Endothelial cell of umbilical vein (primary cell): ENCODE measurements at regions of chr1 and their contacts with region 1.

Region 1: DNA sequence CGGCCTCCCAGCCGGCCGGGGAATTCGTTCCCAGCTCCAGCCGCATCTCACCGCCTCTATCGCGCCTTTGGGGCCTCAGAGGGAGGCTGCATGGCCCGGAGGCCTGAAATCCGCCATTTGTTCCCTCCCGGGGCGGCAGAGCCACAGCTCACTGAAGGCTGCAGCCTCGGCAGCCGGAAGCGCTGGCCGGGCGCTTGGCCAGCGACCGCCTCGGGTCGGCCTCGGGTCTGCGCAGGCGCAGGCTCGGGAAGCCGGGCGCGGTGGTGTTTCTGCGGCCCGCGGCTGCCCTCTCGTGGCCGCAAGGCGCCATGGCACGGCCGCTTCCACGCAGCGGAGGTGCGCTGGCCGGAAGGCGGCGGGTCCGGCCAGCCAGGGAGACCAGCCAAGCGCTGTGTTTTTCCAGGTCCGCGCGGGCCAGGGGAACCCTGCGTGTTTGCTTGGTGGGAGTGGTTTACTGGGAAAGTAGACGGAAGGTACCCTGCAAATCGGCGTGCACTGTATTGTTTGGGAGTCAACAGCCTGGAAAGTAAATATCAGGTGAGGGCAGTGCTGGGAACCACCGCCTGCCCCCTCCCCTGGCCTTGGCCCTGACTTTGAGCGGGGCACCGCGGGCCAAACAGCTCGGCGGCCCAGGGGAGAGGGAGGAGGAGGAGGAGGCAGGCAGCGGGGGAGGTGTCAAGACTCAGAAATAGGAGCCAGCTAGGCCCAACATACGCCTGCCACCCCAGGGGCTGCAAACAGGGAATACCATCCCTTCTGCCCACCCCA is 52.7 kb upstream of the CD34 start:
- DNase-seq: peak; percentile 94
- H3K4me3 ChIP-seq: peak overlapping the region in 2 of 3 experiments; percentile 1 to 17
- H3K27ac ChIP-seq: peak overlapping the region; percentile 81
- H3K4me1 ChIP-seq: peaks cover 29% of the 10 kb centered on the region
- H3K27me3 ChIP-seq: no peaks in the 10 kb centered on the region
- CTCF ChIP-seq: peak; percentile 92 to 99
- POLR2A ChIP-seq: peak; percentile 59

Region 2: GRCh38 chr1:207828485-207829158 is 135.0 kb before region 1 on chr1:
- CTCF ChIA-PET with region 1: interaction called, 69 read pairs
- POLR2A ChIA-PET with region 1: interaction called, 3 read pairs
- dilution Hi-C with region 1: no loop called
- intact Hi-C with region 1: loop called (anchors 1 kb)
- DNase-seq: peak; percentile 96
- H3K4me3 ChIP-seq: no peak overlapping the region
- H3K27ac ChIP-seq: peak overlapping the region; percentile 14
- H3K4me1 ChIP-seq: peaks cover 45% of the 10 kb centered on the region
- H3K27me3 ChIP-seq: no peaks in the 10 kb centered on the region
- CTCF ChIP-seq: peak; percentile 82 to 94
- POLR2A ChIP-seq: peak; percentile 23

Region 3: DNA sequence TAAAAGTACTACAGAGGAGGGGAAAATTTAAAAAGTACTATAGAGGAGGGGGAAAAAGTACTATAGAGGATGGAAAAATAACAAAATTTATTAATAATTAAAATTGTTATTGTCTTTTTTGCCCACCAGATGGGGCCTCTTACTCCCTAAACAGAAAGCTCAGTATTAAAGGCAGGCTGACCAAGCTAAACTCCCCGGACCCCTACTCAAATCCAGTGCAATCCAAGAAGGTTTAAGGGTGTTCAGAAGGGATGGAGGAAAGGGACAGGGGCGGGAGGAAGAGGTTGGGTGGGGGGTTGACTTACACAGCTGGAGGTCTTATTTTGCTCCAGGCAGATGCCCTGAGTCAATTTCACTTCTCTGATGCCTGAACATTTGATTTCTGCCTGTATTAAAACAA is 66.4 kb before region 1 on chr1:
- CTCF ChIA-PET with region 1: interaction called, 301 read pairs
- POLR2A ChIA-PET with region 1: interaction called, 8 read pairs
- dilution Hi-C with region 1: no loop called
- intact Hi-C with region 1: loop called (anchors 1 kb)
- DNase-seq: peak; percentile 57
- H3K4me3 ChIP-seq: no peak overlapping the region
- H3K27ac ChIP-seq: no peak overlapping the region
- H3K4me1 ChIP-seq: peaks cover 6% of the 10 kb centered on the region
- H3K27me3 ChIP-seq: no peaks in the 10 kb centered on the region
- CTCF ChIP-seq: peak; percentile 8 to 11
- POLR2A ChIP-seq: no peak

Region 4: GRCh38 chr1:207919523-207920170 is 44.0 kb before region 1 on chr1:
- CTCF ChIA-PET with region 1: interaction called, 50 read pairs
- POLR2A ChIA-PET with region 1: interaction called, 3 read pairs
- dilution Hi-C with region 1: no loop called
- intact Hi-C with region 1: loop called (anchors 1 kb)
- DNase-seq: peak; percentile 53
- H3K4me3 ChIP-seq: no peak overlapping the region
- H3K27ac ChIP-seq: no peak overlapping the region
- H3K4me1 ChIP-seq: peaks cover 30% of the 10 kb centered on the region
- H3K27me3 ChIP-seq: no peaks in the 10 kb centered on the region
- CTCF ChIP-seq: no peak
- POLR2A ChIP-seq: no peak

Region 5: DNA sequence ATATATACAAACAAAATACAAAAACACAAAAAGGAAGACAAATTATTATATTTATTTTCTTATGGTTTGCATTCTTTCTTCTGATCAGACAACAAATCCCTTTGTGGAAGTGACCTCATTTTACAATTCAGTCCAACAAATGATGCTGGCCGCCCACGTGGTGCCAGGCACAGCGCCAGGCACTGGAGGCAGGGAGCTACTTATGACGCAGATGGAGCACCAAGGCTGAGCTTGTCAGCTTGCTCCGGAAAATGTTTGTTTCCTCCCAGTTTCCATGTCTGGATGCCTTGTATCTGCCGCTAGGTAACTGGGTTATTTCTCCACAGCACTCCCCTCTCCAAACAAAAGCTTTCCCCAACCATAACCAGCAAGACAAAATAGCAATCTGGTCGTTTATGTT is 21.9 kb before region 1 on chr1:
- CTCF ChIA-PET with region 1: interaction called, 54 read pairs
- POLR2A ChIA-PET with region 1: interaction called, 14 read pairs
- dilution Hi-C with region 1: no loop called
- intact Hi-C with region 1: loop called (anchors 1 kb)
- DNase-seq: peak; percentile 97
- H3K4me3 ChIP-seq: peak overlapping the region in 1 of 3 experiments; percentile 8
- H3K27ac ChIP-seq: peak overlapping the region; percentile 92
- H3K4me1 ChIP-seq: peaks cover 52% of the 10 kb centered on the region
- H3K27me3 ChIP-seq: no peaks in the 10 kb centered on the region
- CTCF ChIP-seq: no peak
- POLR2A ChIP-seq: peak; percentile 49

Region 6: DNA sequence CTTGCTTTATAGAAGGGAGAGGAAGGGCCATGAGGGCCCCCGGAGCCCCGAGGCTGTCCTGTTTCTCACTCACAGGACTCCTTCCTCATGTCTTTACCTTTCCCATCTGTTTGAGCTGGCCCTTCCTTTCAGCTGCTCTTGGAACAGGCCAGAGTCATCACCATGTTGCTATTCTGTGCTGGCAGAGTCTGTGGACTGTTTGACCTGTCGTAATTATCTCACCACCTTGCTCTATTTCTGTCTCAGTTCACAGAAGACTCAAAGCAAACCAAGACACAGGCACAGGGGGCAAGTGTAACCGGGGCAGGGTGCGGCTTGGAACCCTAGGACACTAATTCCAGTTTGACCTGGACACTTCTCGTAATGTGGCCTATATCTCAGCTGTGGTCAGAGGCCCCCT is 51.6 kb after region 1 on chr1:
- CTCF ChIA-PET with region 1: no interaction called
- POLR2A ChIA-PET with region 1: no interaction called
- dilution Hi-C with region 1: no loop called
- intact Hi-C with region 1: no loop called
- DNase-seq: no peak
- H3K4me3 ChIP-seq: no peak overlapping the region
- H3K27ac ChIP-seq: no peak overlapping the region
- H3K4me1 ChIP-seq: no peaks in the 10 kb centered on the region
- H3K27me3 ChIP-seq: peaks cover 0 to 3% of the 10 kb centered on the region in 2 experiments
- CTCF ChIP-seq: no peak
- POLR2A ChIP-seq: no peak